PC-3 (cell line): ENCODE measurements at regions of chr14 and their contacts with region 1.

Region 1: DNA sequence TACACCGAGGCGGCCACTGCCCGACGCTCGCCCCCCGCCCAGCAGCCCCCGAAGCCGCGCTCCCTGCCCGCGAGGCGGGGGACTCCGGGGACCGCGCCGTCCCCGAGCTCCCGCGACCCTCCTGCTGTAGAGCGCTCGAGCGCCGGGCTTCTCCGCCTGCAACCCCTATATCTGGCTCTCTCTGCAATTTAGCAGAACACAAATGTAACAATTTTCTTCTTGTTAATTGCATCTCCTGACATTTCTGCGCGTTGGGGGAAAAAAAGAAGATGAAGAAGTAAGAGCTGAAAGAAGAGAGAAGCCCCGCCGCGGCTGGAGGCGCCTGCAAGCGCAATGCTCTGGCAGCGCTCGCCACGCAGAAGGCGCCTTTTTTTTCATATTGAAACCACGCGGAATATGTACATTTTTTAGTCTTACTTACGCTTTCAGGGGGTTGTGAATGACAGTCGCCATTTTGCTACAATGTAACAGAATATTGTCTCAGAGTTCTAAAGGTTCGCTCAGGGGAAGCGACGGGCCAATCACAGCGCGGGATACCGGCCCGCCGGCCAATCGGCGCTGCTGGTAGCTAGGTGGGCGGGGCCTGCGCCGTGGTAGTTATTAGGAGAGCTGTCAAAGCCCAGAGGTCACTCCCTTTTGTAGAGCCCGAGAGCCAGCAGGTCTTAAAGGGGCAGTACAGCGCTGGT is at the start of gene DPF3:
- DNase-seq: peak; percentile 99
- ATAC-seq: peak; percentile 86
- H3K4me3 ChIP-seq: peak within 1 kb of the TSS; percentile 82
- H3K27ac ChIP-seq: peak within 1 kb of the TSS; percentile 1; the same call in 1 of the 2 replicates
- H3K4me1 ChIP-seq: peaks cover 25% of the 10 kb centered on the region
- H3K27me3 ChIP-seq: no peaks in the 10 kb centered on the region
- CTCF ChIP-seq: no peak
- total RNA-seq, gene DPF3: 16.6 and 30.5 TPM in 2 replicates

Region 2: GRCh38 chr14:72516936-72517700 is 376.7 kb before region 1 on chr14:
- CTCF ChIA-PET with region 1: interaction called, 20 read pairs
- POLR2A ChIA-PET with region 1: interaction called, 3 read pairs
- intact Hi-C with region 1: no loop called
- DNase-seq: peak; percentile 95
- ATAC-seq: peak; percentile 64
- H3K4me3 ChIP-seq: no peak overlapping the region
- H3K27ac ChIP-seq: no peak overlapping the region
- H3K4me1 ChIP-seq: peaks cover 18% of the 10 kb centered on the region
- H3K27me3 ChIP-seq: no peaks in the 10 kb centered on the region
- CTCF ChIP-seq: peak; percentile 98

Region 3: DNA sequence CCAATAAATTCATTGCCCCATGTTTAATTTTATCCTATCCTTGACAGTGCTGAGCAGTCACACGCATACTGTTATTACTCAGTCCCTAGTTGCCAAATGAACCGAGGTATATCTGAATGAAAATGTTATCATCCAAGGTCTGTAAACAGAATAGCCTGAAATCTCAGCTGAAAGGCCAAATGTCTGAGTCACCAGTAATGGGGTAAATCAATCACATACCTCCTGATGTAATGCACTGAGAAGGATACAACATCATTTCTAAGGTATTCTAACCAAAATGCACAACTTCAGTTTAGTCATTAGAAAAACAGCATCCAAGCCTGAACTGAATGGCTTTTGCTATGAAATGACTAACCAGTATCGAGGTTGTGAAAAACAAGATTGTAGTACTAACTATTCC is 228.5 kb before region 1 on chr14:
- CTCF ChIA-PET with region 1: no interaction called
- POLR2A ChIA-PET with region 1: no interaction called
- intact Hi-C with region 1: loop called (anchors 1 kb)
- DNase-seq: peak; percentile 99
- ATAC-seq: peak; percentile 83
- H3K4me3 ChIP-seq: peak overlapping the region; percentile 39
- H3K27ac ChIP-seq: peak overlapping the region; percentile 86
- H3K4me1 ChIP-seq: peaks cover 41% of the 10 kb centered on the region
- H3K27me3 ChIP-seq: no peaks in the 10 kb centered on the region
- CTCF ChIP-seq: no peak

Region 4: GRCh38 chr14:72745991-72746980 is 147.5 kb before region 1 on chr14:
- CTCF ChIA-PET with region 1: interaction called, 7 read pairs
- POLR2A ChIA-PET with region 1: interaction called, 4 read pairs
- intact Hi-C with region 1: loop called (anchors 2 kb)
- DNase-seq: peak; percentile 48
- ATAC-seq: peak; percentile 41
- H3K4me3 ChIP-seq: no peak overlapping the region
- H3K27ac ChIP-seq: peak overlapping the region; percentile 67
- H3K4me1 ChIP-seq: peaks cover 27% of the 10 kb centered on the region
- H3K27me3 ChIP-seq: no peaks in the 10 kb centered on the region
- CTCF ChIP-seq: peak; percentile 36

Region 5: GRCh38 chr14:72904840-72905561 is 11.2 kb after region 1 on chr14:
- CTCF ChIA-PET with region 1: interaction called, 17 read pairs
- POLR2A ChIA-PET with region 1: interaction called, 17 read pairs
- intact Hi-C with region 1: no loop called
- DNase-seq: peak; percentile 90
- ATAC-seq: peak; percentile 76
- H3K4me3 ChIP-seq: no peak overlapping the region
- H3K27ac ChIP-seq: no peak overlapping the region
- H3K4me1 ChIP-seq: peaks cover 31% of the 10 kb centered on the region
- H3K27me3 ChIP-seq: no peaks in the 10 kb centered on the region
- CTCF ChIP-seq: peak; percentile 100

Region 6: GRCh38 chr14:72926292-72927028 is 32.7 kb after region 1 on chr14 and contains the start of gene DCAF4:
- CTCF ChIA-PET with region 1: no interaction called
- POLR2A ChIA-PET with region 1: no interaction called
- intact Hi-C with region 1: loop called (anchors 1 kb)
- DNase-seq: peak; percentile 99
- ATAC-seq: peak; percentile 96
- H3K4me3 ChIP-seq: peak within 1 kb of the TSS; percentile 77
- H3K27ac ChIP-seq: peak within 1 kb of the TSS; percentile 63
- H3K4me1 ChIP-seq: peaks cover 12% of the 10 kb centered on the region
- H3K27me3 ChIP-seq: no peaks in the 10 kb centered on the region
- CTCF ChIP-seq: no peak
- total RNA-seq, gene DCAF4: 55.8 and 56.8 TPM in 2 replicates